A673 (cell line): ENCODE measurements at regions of chr20 and their contacts with region 1.

Region 1: GRCh38 chr20:330233-331149 is 5.1 kb downstream of the SOX12 start:
- DNase-seq: peak; percentile 83
- H3K4me3 ChIP-seq: no peak overlapping the region
- H3K27ac ChIP-seq: no peak overlapping the region
- H3K4me1 ChIP-seq: peaks cover 13% of the 10 kb centered on the region
- H3K27me3 ChIP-seq: no peaks in the 10 kb centered on the region
- CTCF ChIP-seq: peak; percentile 89

Region 2: DNA sequence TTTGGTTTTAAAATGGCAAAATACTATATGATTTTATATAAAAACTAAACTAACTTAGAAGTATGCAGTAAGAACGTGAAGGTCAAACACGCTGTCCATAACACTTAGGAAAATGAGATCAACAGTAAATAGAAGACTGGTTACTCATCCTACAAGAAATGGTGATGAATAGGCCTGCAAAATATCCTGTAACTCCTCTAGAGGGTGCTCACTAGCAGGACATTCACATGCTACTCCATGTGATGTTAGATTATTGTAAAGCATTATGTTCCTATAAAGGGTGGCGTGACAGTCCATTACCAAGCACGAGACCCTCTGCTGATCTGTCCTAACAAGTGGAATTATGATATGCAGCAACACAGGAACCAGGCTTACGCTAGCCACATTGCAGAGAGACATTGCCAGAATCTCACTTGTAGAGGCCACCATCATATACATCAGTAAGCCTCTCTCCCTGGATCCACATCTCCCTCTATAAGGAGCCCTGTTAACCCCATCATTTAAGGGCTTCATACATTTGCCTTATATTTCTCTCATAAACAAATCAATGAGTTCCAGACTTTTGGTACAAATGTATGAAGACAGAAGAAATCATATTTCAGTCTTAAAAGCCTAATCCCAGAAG is 121.4 kb before region 1 on chr20:
- CTCF ChIA-PET with region 1: no interaction called
- POLR2A ChIA-PET with region 1: no interaction called
- intact Hi-C with region 1: loop called (anchors 2 kb)
- DNase-seq: peak; percentile 69
- H3K4me3 ChIP-seq: no peak overlapping the region
- H3K27ac ChIP-seq: no peak overlapping the region
- H3K4me1 ChIP-seq: no peaks in the 10 kb centered on the region
- H3K27me3 ChIP-seq: no peaks in the 10 kb centered on the region
- CTCF ChIP-seq: peak; percentile 76

Region 3: GRCh38 chr20:227439-228105 is 102.9 kb before region 1 on chr20:
- CTCF ChIA-PET with region 1: no interaction called
- POLR2A ChIA-PET with region 1: no interaction called
- intact Hi-C with region 1: no loop called
- DNase-seq: no peak
- H3K4me3 ChIP-seq: no peak overlapping the region
- H3K27ac ChIP-seq: no peak overlapping the region
- H3K4me1 ChIP-seq: no peaks in the 10 kb centered on the region
- H3K27me3 ChIP-seq: no peaks in the 10 kb centered on the region
- CTCF ChIP-seq: no peak

Region 4: GRCh38 chr20:266596-267562 is 63.6 kb before region 1 on chr20:
- CTCF ChIA-PET with region 1: interaction called, 11 read pairs
- POLR2A ChIA-PET with region 1: interaction called, 3 read pairs
- intact Hi-C with region 1: no loop called
- DNase-seq: peak; percentile 92
- H3K4me3 ChIP-seq: peak overlapping the region; percentile 49
- H3K27ac ChIP-seq: peak overlapping the region; percentile 41
- H3K4me1 ChIP-seq: peaks cover 5% of the 10 kb centered on the region
- H3K27me3 ChIP-seq: no peaks in the 10 kb centered on the region
- CTCF ChIP-seq: peak; percentile 97

Region 5: DNA sequence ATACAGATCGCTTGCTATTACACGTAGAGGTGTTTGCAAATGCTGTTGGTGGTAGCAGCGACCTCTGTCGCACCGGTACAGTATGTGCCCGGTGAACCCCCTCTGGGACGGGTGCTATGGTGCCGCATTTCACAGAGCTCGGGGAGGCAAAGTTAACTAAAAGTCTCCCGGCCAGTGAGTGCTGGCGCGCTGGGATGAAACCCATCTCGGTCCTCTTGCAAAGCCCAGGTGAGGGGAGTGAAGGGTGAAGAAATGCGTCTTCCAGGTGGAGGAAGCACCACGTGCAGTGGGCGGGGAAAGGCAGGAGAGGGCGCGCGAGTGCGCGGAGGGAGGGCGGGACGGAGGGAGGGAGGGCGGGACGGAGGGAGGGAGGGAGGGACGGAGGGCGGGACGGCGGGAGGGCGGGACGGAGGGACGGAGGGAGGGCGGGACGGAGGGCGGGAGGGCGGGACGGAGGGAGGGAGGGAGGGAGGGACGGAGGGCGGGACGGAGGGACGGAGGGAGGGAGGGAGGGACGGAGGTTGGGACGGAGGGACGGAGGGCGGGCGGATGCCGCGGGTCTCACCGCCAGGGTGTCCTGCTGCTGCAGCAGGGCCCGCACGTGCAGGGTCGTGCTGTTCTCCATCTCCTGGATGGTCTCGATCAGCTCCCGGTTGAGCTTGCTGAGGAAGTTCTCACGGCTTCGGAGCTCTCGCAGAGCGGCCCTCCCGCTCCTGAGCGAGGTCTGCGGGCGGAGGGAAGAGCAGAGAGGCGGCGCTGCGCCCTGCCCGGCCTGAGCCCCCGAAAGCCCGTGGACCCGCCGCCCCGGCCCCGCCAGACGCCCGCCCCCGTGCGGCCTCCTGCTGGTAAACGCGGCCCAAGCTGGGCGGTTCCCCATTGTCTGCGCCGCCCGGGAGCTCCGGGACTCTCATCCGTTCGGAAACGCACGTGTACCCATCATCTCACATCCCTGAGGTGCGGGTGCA is 51.6 kb before region 1 on chr20:
- CTCF ChIA-PET with region 1: interaction called, 5 read pairs
- POLR2A ChIA-PET with region 1: no interaction called
- intact Hi-C with region 1: loop called (anchors 1 kb)
- DNase-seq: peak; percentile 71
- H3K4me3 ChIP-seq: peak overlapping the region; percentile 39
- H3K27ac ChIP-seq: no peak overlapping the region
- H3K4me1 ChIP-seq: no peaks in the 10 kb centered on the region
- H3K27me3 ChIP-seq: no peaks in the 10 kb centered on the region
- CTCF ChIP-seq: peak; percentile 47

Region 6: DNA sequence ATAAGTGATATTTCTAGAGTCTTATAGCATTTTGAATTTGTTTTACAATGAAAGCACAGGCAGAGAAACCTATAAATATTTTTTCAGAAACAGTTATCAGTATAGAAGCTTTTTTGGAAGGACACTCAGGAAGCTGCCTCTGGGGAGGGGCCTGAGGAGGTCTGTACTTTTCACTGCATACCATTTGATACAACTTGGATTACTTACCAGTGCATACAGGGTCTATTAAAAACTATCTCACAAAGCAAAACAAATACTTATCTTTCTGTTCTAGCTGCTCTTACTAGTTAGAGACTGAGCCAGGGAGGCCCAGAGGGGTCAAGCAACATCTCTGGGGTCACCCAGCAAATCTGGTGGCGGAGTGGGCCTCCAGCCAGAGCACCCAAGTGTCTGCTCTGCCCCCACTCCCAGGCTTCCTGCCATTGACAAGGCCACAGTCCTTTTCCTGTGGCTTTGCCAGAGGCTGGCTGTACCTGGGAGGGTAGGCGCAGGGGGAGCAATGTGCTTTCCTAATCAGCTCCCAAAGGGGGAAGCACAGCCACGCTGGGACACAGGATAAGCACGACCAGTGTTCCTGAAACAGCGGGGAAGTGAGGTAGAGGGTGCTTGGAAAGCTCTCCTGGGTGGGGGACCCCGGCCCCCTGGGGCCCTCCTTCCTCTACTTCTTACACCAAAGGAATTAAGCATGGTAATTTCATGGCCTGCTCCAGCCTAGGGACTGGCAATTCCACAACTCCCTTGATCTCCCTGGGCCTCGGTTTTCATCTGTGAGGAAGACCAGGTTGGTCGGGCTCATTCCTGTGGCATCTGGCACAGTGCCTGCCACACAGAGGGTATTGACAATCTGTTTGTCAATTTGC is 271.9 kb after region 1 on chr20:
- CTCF ChIA-PET with region 1: no interaction called
- POLR2A ChIA-PET with region 1: no interaction called
- intact Hi-C with region 1: no loop called
- DNase-seq: no peak
- H3K4me3 ChIP-seq: no peak overlapping the region
- H3K27ac ChIP-seq: no peak overlapping the region
- H3K4me1 ChIP-seq: no peaks in the 10 kb centered on the region
- H3K27me3 ChIP-seq: no peaks in the 10 kb centered on the region
- CTCF ChIP-seq: no peak

Region 7: DNA sequence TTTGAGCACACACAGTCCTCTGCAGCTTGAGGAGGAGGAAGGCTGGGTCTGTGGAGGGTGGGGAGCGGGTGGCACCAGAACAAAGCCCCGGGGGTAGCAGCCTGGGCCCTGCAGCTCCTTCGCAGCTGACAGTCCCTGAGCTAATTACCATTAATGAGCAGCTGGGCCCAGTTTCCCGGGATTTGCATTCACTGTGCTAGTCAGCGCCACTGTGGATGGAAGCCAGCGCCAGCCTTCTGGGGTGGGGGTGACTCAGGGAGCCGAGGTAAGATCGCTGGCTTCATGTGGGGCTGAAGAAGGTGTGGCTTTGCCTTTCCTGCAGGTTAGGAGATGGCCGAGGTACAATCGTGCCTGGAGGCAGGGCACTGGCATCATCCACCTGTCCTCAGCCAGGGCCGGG is 304.1 kb after region 1 on chr20:
- CTCF ChIA-PET with region 1: no interaction called
- POLR2A ChIA-PET with region 1: no interaction called
- intact Hi-C with region 1: no loop called
- DNase-seq: no peak
- H3K4me3 ChIP-seq: no peak overlapping the region
- H3K27ac ChIP-seq: no peak overlapping the region
- H3K4me1 ChIP-seq: no peaks in the 10 kb centered on the region
- H3K27me3 ChIP-seq: no peaks in the 10 kb centered on the region
- CTCF ChIP-seq: no peak